ENCODE measurements at regions of chr1 and their contacts with region 1.

Region 1: GRCh38 chr1:87058343-87058649 is 143.9 kb downstream of the HS2ST1 start:
- DNase-seq: peak; percentile 6
- ATAC-seq: 0 out of 2 replicates have a peak, but pooled peaks have one; percentile 40
- H3K4me3 ChIP-seq: no peak overlapping the region
- H3K27ac ChIP-seq: no peak overlapping the region
- H3K4me1 ChIP-seq: peaks cover 15% of the 10 kb centered on the region
- H3K27me3 ChIP-seq: no peaks in the 10 kb centered on the region
- CTCF ChIP-seq: no peak

Region 2: DNA sequence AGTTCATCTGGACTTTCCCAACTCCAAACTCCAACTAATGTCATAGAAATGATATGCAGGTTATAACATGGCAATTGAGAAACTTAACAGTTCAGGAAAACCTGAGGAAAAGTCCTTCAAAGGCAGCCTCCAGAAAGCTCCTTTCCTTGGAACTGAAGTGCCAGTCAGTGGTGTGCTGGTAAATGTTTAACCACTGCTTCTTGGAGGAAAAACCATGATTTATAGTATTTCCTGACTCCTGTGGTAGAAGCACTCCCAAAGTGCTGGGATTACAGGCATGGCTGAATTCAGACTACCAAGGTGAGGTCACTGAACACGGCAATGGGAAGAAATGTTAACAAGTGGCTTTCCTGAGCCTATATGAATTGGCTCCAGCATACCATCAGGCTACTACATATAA is 1323.4 kb before region 1 on chr1:
- CTCF ChIA-PET with region 1: no interaction called
- POLR2A ChIA-PET with region 1: no interaction called
- intact Hi-C with region 1: no loop called
- DNase-seq: no peak
- ATAC-seq: no peak
- H3K4me3 ChIP-seq: no peak overlapping the region
- H3K27ac ChIP-seq: no peak overlapping the region
- H3K4me1 ChIP-seq: no peaks in the 10 kb centered on the region
- H3K27me3 ChIP-seq: no peaks in the 10 kb centered on the region
- CTCF ChIP-seq: no peak

Region 3: GRCh38 chr1:86666368-86666767 is 391.9 kb before region 1 on chr1:
- CTCF ChIA-PET with region 1: no interaction called
- POLR2A ChIA-PET with region 1: no interaction called
- intact Hi-C with region 1: no loop called
- DNase-seq: no peak
- ATAC-seq: no peak
- H3K4me3 ChIP-seq: no peak overlapping the region
- H3K27ac ChIP-seq: no peak overlapping the region
- H3K4me1 ChIP-seq: no peaks in the 10 kb centered on the region
- H3K27me3 ChIP-seq: no peaks in the 10 kb centered on the region
- CTCF ChIP-seq: no peak

Region 4: DNA sequence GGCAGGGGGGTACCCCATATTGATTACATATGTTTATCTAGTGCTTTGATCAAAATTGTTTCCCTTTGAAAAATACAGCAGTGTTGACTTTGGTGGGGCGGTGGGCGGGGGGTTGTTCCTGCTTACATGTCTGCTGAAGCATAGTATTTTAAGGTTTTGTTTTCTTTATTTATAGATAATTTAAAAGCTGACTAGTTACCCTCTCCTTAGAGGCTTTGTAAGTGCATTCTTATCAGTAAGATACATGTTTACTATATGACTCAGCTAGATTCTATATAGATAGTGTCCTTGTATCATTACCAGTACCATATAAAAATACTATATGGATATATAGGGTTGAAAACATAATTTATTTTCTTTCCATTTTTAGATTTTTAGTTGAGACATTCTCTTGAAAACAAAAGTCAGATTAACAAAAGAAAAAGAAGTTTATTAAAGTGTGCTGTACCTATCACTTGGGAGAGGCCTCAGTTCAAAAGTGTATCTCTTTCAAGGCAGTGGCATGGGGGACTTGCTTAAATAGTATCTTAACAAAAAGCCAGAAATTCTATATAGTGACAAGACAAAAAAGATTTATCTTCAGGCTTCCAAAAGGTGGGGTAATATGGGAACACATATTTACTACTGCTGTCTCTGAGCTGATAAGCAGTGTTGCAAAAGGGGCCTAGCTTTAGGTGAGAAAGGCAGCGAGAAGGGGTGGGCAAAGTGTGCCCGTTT is 64.9 kb before region 1 on chr1:
- CTCF ChIA-PET with region 1: no interaction called
- POLR2A ChIA-PET with region 1: no interaction called
- intact Hi-C with region 1: loop called (anchors 10 kb)
- DNase-seq: peak; percentile 42
- ATAC-seq: peak; percentile 68
- H3K4me3 ChIP-seq: peak overlapping the region; percentile 4; the same call in 1 of the 2 replicates
- H3K27ac ChIP-seq: peak overlapping the region; percentile 14
- H3K4me1 ChIP-seq: peaks cover 19% of the 10 kb centered on the region
- H3K27me3 ChIP-seq: no peaks in the 10 kb centered on the region
- CTCF ChIP-seq: no peak

Measured in PC-3 (cell line).